Psoas muscle (tissue), 8 donors: ENCODE measurements at regions of chr7 and their contacts with region 1.

Region 1: GRCh38 chr7:98294796-98295382 is 13.4 kb downstream of the BRI3 start:
- DNase-seq: peak; percentile 37 to 70
- ATAC-seq: peak; percentile 57 to 75 (median 62)
- H3K4me3 ChIP-seq: no peak overlapping the region
- H3K27ac ChIP-seq: peak overlapping the region; percentile 38
- H3K4me1 ChIP-seq: peaks cover 11% of the 10 kb centered on the region
- H3K27me3 ChIP-seq: no peaks in the 10 kb centered on the region
- CTCF ChIP-seq: peak; percentile 55

Region 2: GRCh38 chr7:98097042-98097645 is 197.7 kb before region 1 on chr7:
- intact Hi-C with region 1: no loop called
- DNase-seq: no peak
- ATAC-seq: no peak
- H3K4me3 ChIP-seq: no peak overlapping the region
- H3K27ac ChIP-seq: no peak overlapping the region
- H3K4me1 ChIP-seq: no peaks in the 10 kb centered on the region
- H3K27me3 ChIP-seq: peaks cover 0 to 3% (median 0%) of the 10 kb centered on the region in 3 donors
- CTCF ChIP-seq: no peak

Region 3: GRCh38 chr7:98178347-98178746 is 116.5 kb before region 1 on chr7:
- intact Hi-C with region 1: no loop called
- DNase-seq: peak; percentile 57 to 91
- ATAC-seq: peak; percentile 76 to 86 (median 82)
- H3K4me3 ChIP-seq: peak overlapping the region; percentile 56
- H3K27ac ChIP-seq: peak overlapping the region; percentile 80
- H3K4me1 ChIP-seq: peaks cover 45% of the 10 kb centered on the region
- H3K27me3 ChIP-seq: no peaks in the 10 kb centered on the region
- CTCF ChIP-seq: no peak

Region 4: GRCh38 chr7:98400542-98401340 is 105.9 kb after region 1 on chr7 and contains the start of gene BAIAP2L1:
- intact Hi-C with region 1: loop called in 1 of 2 experiments (anchors 5 kb)
- DNase-seq: peak; percentile 75 to 82
- ATAC-seq: peak; percentile 84 to 95 (median 89)
- H3K4me3 ChIP-seq: peak within 1 kb of the TSS; percentile 70
- H3K27ac ChIP-seq: no peak within 1 kb of the TSS
- H3K4me1 ChIP-seq: no peaks in the 10 kb centered on the region
- H3K27me3 ChIP-seq: peaks cover 0 to 28% (median 5%) of the 10 kb centered on the region in 3 donors
- CTCF ChIP-seq: peak; percentile 51
- total RNA-seq, gene BAIAP2L1: 0.80 to 3.0 (median 1.7) TPM

Region 5: GRCh38 chr7:99079104-99079503 is 784.2 kb after region 1 on chr7:
- intact Hi-C with region 1: no loop called
- DNase-seq: no peak
- ATAC-seq: peak in 3 of 4 donors; percentile 39 to 74 (median 67)
- H3K4me3 ChIP-seq: no peak overlapping the region
- H3K27ac ChIP-seq: no peak overlapping the region
- H3K4me1 ChIP-seq: peaks cover 15% of the 10 kb centered on the region
- H3K27me3 ChIP-seq: no peaks in the 10 kb centered on the region
- CTCF ChIP-seq: no peak